ENCODE measurements at regions of chr1 and their contacts with region 1.

Region 1: DNA sequence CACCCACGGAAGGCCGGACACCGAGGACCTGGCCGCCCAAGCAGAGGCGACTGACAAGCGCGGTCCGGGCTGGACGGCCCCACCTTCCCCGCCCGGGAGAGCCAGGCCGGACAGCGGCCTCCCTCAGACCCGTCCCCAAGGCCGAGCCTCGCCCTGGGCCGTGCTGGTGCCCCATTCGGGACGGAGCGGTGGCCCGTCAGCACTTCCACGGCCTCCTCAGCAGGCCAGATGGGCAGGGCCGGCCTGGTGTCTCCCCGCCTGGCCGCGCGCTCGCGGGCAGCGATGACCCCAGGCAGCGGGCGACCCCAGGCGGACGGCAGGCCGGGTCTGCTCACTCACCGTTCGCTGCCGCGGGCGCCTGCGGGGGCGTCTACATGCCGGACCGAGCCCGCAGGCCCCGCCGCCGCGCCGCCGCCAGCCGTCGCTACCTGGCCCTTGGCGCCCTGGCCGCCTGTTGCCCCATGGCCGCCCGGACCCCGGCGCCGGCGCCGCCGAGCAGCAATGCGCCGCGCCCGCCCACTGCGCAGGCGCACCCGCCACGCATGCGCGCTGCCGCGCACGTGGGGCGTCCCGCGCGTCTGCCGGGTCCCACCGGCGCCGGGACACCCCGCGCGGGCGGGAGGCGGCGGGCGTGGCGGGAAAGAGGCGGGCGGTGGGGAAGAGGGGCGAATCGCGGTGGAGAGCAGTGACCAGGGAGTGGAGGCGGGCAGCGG is at the start of gene NADK:
- DNase-seq: peak in 1 of 2 donors; percentile 81
- H3K4me3 ChIP-seq: peak within 1 kb of the TSS; percentile 86 to 99
- H3K27ac ChIP-seq: peak within 1 kb of the TSS; percentile 93
- H3K4me1 ChIP-seq: peaks cover 80% of the 10 kb centered on the region
- H3K27me3 ChIP-seq: no peaks in the 10 kb centered on the region
- CTCF ChIP-seq: no peak
- POLR2A ChIP-seq: peak in 1 of 2 donors; percentile 63
- total RNA-seq, gene NADK: 90.1 TPM

Region 2: GRCh38 chr1:1890506-1891348 is 112.6 kb after region 1 on chr1 and contains the start of gene GNB1:
- intact Hi-C with region 1: loop called (anchors 1 kb)
- DNase-seq: no peak
- H3K4me3 ChIP-seq: peak within 1 kb of the TSS; percentile 86 to 92
- H3K27ac ChIP-seq: peak within 1 kb of the TSS; percentile 94
- H3K4me1 ChIP-seq: peaks cover 79% of the 10 kb centered on the region
- H3K27me3 ChIP-seq: no peaks in the 10 kb centered on the region
- CTCF ChIP-seq: no peak
- POLR2A ChIP-seq: peak in 1 of 2 donors; percentile 64
- total RNA-seq, gene GNB1: 159 TPM

Region 3: DNA sequence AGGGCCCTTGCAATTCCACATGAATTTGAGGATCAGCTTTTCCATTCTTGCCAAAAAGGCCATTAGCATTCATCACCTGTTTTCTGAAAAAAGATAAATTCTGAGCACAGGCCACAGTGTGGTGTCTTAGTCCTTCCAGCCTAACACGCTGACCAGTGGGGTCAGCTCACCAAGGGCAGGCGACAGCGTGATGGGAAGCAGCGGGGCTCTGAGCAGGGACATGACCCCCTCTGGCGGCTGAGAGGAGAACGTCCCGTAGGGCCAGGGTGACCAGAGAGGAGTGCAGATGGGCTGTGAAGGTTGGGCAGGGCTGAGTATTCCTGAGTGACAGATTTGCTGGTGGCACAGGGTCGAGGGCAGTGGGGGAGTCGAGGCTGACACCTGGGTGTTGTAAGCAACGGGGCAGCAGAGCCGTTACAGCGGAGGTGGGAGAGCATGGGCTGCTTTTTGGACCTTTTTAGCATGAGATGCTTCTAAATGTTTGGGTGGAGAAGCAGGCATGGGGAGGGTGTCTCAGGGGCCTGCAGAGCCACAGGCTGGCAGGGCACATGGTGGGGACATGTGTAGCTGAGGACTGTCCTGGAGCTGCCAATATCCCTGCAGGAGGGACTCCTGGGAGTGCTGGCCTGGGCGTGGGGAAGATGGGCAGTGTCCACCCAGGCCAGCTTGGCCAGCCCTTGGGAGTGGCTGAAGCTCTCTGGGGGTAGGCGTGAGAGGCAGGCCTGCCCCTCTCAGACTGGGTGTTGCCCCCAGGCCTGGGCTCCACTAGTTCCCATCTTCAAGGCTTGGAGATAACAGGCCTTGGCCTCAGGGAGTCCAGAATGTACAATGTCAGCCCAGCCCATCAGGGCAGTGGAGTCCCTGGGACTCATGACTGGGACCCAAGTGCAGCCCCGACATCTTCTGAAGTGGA is 128.3 kb after region 1 on chr1:
- intact Hi-C with region 1: loop called (anchors 5 kb)
- DNase-seq: no peak
- H3K4me3 ChIP-seq: no peak overlapping the region
- H3K27ac ChIP-seq: peak overlapping the region; percentile 39
- H3K4me1 ChIP-seq: peaks cover 37% of the 10 kb centered on the region
- H3K27me3 ChIP-seq: no peaks in the 10 kb centered on the region
- CTCF ChIP-seq: peak; percentile 82 to 88 (median 85)
- POLR2A ChIP-seq: no peak

Region 4: GRCh38 chr1:2539312-2539907 is 761.3 kb after region 1 on chr1:
- intact Hi-C with region 1: no loop called
- DNase-seq: no peak
- H3K4me3 ChIP-seq: no peak overlapping the region
- H3K27ac ChIP-seq: no peak overlapping the region
- H3K4me1 ChIP-seq: peaks cover 36% of the 10 kb centered on the region
- H3K27me3 ChIP-seq: no peaks in the 10 kb centered on the region
- CTCF ChIP-seq: no peak
- POLR2A ChIP-seq: no peak

Measured in vagina (tissue), 2 donors.